Caco-2 (cell line): ENCODE measurements at regions of chr4 and their contacts with region 1.

Region 1: DNA sequence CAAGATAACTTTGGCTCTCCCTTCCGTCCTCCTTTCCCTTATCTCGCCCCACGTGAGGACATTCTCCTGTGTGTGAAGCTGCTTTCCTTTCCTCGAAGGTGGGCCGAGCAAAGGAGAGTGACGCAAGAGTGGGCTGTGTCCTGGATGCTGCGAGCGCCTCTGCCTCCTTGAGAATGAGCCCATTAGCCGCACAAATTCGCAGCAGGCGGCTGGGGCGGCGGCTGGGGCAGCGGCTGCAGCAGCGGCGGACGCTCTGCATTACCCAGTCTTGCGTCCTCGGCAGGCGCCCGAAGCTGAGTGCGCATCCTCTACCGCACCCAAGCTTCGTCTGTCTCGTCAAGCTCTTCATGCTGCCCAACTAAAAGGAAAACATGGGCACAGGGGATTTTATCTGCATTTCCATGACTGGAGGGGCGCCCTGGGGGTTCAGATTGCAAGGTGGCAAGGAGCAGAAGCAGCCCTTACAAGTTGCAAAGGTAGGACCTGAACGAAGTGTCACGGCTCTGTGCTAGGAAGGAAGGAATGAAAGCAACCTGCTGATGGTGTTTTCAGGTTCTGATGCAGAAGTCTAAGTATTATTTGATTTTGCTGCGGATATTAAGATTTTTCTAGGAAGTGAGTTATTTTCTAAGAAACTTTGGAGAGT is at the start of gene SYNPO2:
- DNase-seq: peak; percentile 62 to 69
- H3K4me3 ChIP-seq: peak within 1 kb of the TSS; percentile 15
- H3K4me3 Mint-ChIP-seq: peak within 1 kb of the TSS; percentile 75
- H3K27ac Mint-ChIP-seq: no peak within 1 kb of the TSS
- H3K4me1 ChIP-seq: no peaks in the 10 kb centered on the region
- H3K4me1 Mint-ChIP-seq: peaks cover 17% of the 10 kb centered on the region
- H3K27me3 ChIP-seq: no peaks in the 10 kb centered on the region
- H3K27me3 Mint-ChIP-seq: peaks cover 16% of the 10 kb centered on the region
- CTCF ChIP-seq: no peak
- total RNA-seq, gene SYNPO2: 0.09 and 0.16 TPM in 2 replicates

Region 2: GRCh38 chr4:118684873-118685811 is 203.6 kb before region 1 on chr4 and contains the start of gene METTL14:
- CTCF ChIA-PET with region 1: no interaction called
- POLR2A ChIA-PET with region 1: no interaction called
- intact Hi-C with region 1: no loop called
- DNase-seq: peak; percentile 92
- H3K4me3 ChIP-seq: peak within 1 kb of the TSS; percentile 73
- H3K4me3 Mint-ChIP-seq: peak within 1 kb of the TSS; percentile 95
- H3K27ac Mint-ChIP-seq: peak within 1 kb of the TSS; percentile 96
- H3K4me1 ChIP-seq: peaks cover 4% of the 10 kb centered on the region; the same call in 1 of the 2 replicates
- H3K4me1 Mint-ChIP-seq: peaks cover 12% of the 10 kb centered on the region
- H3K27me3 ChIP-seq: no peaks in the 10 kb centered on the region
- H3K27me3 Mint-ChIP-seq: no peaks in the 10 kb centered on the region
- CTCF ChIP-seq: peak in 1 of 2 experiments; percentile 21
- total RNA-seq, gene METTL14: 46.7 and 51.8 TPM in 2 replicates

Region 3: GRCh38 chr4:118740869-118741268 is 147.9 kb before region 1 on chr4:
- CTCF ChIA-PET with region 1: no interaction called
- POLR2A ChIA-PET with region 1: no interaction called
- intact Hi-C with region 1: loop called (anchors 1 kb)
- DNase-seq: no peak
- H3K4me3 ChIP-seq: no peak overlapping the region
- H3K4me3 Mint-ChIP-seq: no peak overlapping the region
- H3K27ac Mint-ChIP-seq: no peak overlapping the region
- H3K4me1 ChIP-seq: no peaks in the 10 kb centered on the region
- H3K4me1 Mint-ChIP-seq: no peaks in the 10 kb centered on the region
- H3K27me3 ChIP-seq: no peaks in the 10 kb centered on the region
- H3K27me3 Mint-ChIP-seq: no peaks in the 10 kb centered on the region
- CTCF ChIP-seq: peak in 1 of 2 experiments; percentile 34

Region 4: GRCh38 chr4:118772081-118772766 is 116.6 kb before region 1 on chr4:
- CTCF ChIA-PET with region 1: interaction called, 9 read pairs
- POLR2A ChIA-PET with region 1: no interaction called
- intact Hi-C with region 1: loop called (anchors 1 kb)
- DNase-seq: peak in 1 of 2 experiments; percentile 20
- H3K4me3 ChIP-seq: no peak overlapping the region
- H3K4me3 Mint-ChIP-seq: no peak overlapping the region
- H3K27ac Mint-ChIP-seq: no peak overlapping the region
- H3K4me1 ChIP-seq: no peaks in the 10 kb centered on the region
- H3K4me1 Mint-ChIP-seq: no peaks in the 10 kb centered on the region
- H3K27me3 ChIP-seq: no peaks in the 10 kb centered on the region
- H3K27me3 Mint-ChIP-seq: no peaks in the 10 kb centered on the region
- CTCF ChIP-seq: peak; percentile 22 to 40

Region 5: GRCh38 chr4:118845552-118846055 is 43.2 kb before region 1 on chr4:
- CTCF ChIA-PET with region 1: no interaction called
- POLR2A ChIA-PET with region 1: no interaction called
- intact Hi-C with region 1: loop called (anchors 1 kb)
- DNase-seq: no peak
- H3K4me3 ChIP-seq: no peak overlapping the region
- H3K4me3 Mint-ChIP-seq: no peak overlapping the region
- H3K27ac Mint-ChIP-seq: no peak overlapping the region
- H3K4me1 ChIP-seq: no peaks in the 10 kb centered on the region
- H3K4me1 Mint-ChIP-seq: peaks cover 7% of the 10 kb centered on the region
- H3K27me3 ChIP-seq: no peaks in the 10 kb centered on the region
- H3K27me3 Mint-ChIP-seq: no peaks in the 10 kb centered on the region
- CTCF ChIP-seq: no peak